Body of pancreas (tissue), 4 donors: ENCODE measurements at regions of chr15 and their contacts with region 1.

Region 1: DNA sequence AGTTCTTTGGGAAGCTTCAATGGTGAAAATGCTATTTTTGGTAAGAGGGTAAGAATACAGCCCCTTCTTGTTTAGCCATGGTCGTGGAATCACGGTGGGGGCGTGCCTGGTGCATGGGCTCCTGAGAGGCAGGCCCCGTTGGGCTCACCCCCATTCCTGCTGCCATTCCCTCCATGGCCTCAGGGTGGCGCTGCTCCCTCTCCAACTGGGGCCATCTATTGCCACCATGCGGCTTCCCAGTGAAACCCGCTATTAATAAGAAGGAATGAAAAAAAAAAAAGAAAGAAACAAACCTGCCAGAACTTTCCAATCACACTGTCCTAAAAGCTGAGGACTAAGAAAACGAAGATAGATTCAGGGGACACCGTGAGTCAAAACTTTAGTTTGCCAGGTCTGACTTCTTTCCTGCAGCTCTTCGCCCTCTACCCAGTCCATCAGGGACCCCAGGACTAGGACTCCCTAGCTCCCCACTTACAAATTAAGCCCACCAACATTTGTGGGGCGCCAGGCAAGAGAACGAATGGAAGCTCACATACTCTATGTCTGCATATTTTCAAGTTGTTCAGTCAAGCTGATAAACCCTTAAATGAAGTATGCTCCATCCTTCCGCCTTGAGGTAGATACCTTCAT is 30.6 kb upstream of the ABHD2 start:
- DNase-seq: peak; percentile 82 to 89 (median 86)
- ATAC-seq: peak; percentile 88
- H3K4me3 ChIP-seq: no peak overlapping the region
- H3K27ac ChIP-seq: no peak overlapping the region
- H3K4me1 ChIP-seq: peaks cover 8% of the 10 kb centered on the region
- H3K27me3 ChIP-seq: no peaks in the 10 kb centered on the region
- CTCF ChIP-seq: peak; percentile 92 to 100 (median 98)
- POLR2A ChIP-seq: no peak

Region 2: DNA sequence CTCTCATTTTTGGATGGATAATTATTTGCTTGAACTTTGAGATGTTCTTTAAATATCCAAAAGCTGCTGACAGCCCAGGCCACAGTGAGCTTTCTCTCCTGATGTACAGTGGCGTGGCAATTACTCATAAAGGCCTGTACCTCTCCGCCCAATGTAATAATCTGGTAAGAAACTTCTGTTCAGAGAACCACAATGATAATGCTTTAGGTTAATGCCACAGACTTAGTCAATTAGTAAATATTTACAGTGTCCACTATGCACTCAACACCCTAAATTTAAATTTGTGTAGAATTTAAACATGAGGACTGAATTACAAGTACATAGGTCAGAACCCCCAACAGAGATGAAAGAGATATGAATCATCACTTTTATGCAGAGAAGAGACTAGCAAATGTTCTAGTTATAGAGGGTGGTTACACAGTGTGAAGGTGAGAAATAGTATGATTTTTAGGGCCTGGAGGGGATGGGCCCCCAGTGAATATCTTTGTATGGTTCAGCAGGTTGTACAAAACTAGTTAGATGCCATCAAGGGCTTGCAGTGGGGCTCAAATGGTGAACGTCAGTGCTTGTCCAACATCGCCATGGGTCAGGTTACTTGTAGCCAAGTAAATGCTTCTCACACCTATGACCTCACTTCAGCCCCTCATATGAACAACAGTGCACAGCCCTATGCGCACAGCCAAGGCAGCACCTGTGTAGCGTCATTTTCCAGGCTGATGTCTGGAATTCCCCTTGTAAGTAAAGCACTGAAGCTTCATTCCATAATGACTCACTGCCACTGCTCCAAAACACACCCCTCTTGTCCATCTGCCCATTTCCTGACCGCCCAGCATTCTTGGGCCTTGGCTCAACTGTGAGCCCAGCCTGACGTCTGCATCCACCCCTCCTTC is 43.9 kb after region 1 on chr15:
- intact Hi-C with region 1: loop called (anchors 10 kb)
- DNase-seq: peak; percentile 64 to 87 (median 76)
- ATAC-seq: peak; percentile 90
- H3K4me3 ChIP-seq: no peak overlapping the region
- H3K27ac ChIP-seq: peak overlapping the region; percentile 15 to 82 (median 78)
- H3K4me1 ChIP-seq: peaks cover 90% of the 10 kb centered on the region
- H3K27me3 ChIP-seq: no peaks in the 10 kb centered on the region
- CTCF ChIP-seq: no peak
- POLR2A ChIP-seq: no peak